ENCODE measurements at regions of chr19 and their contacts with region 1.

Region 1: GRCh38 chr19:47707135-47707925 is 5.9 kb upstream of the EHD2 start:
- DNase-seq: peak; percentile 50 to 83 (median 63)
- ATAC-seq: peak; percentile 59 to 90 (median 86)
- H3K4me3 ChIP-seq: no peak overlapping the region
- H3K27ac ChIP-seq: no peak overlapping the region
- H3K4me1 ChIP-seq: peaks cover 0 to 5% (median 0%) of the 10 kb centered on the region in 12 donors
- H3K27me3 ChIP-seq: no peaks in the 10 kb centered on the region
- CTCF ChIP-seq: peak; percentile 65 to 88 (median 80)
- POLR2A ChIP-seq: no peak

Region 2: GRCh38 chr19:47296036-47296435 is 411.3 kb before region 1 on chr19:
- intact Hi-C with region 1: loop called in 3 of 10 experiments (anchors 5 to 10 kb)
- DNase-seq: peak in 4 of 5 donors; percentile 67 to 76 (median 72)
- ATAC-seq: peak in 3 of 4 donors; percentile 87 to 88 (median 88)
- H3K4me3 ChIP-seq: no peak overlapping the region
- H3K27ac ChIP-seq: no peak overlapping the region
- H3K4me1 ChIP-seq: no peaks in the 10 kb centered on the region
- H3K27me3 ChIP-seq: no peaks in the 10 kb centered on the region
- CTCF ChIP-seq: peak; percentile 66 to 79 (median 74)
- POLR2A ChIP-seq: no peak

Region 3: GRCh38 chr19:47305309-47305751 is 402.0 kb before region 1 on chr19:
- intact Hi-C with region 1: loop called in 1 of 10 experiments (anchors 10 kb)
- DNase-seq: peak; percentile 34 to 85 (median 64)
- ATAC-seq: peak in 2 of 4 donors; percentile 34 to 73
- H3K4me3 ChIP-seq: no peak overlapping the region
- H3K27ac ChIP-seq: no peak overlapping the region
- H3K4me1 ChIP-seq: peaks cover 0 to 8% (median 0%) of the 10 kb centered on the region in 12 donors
- H3K27me3 ChIP-seq: no peaks in the 10 kb centered on the region
- CTCF ChIP-seq: peak; percentile 87 to 95 (median 90)
- POLR2A ChIP-seq: no peak

Region 4: GRCh38 chr19:47436712-47437401 is 270.5 kb before region 1 on chr19:
- intact Hi-C with region 1: loop called in 2 of 10 experiments (anchors 1 kb)
- DNase-seq: peak; percentile 64 to 83 (median 75)
- ATAC-seq: peak; percentile 74 to 93 (median 90)
- H3K4me3 ChIP-seq: no peak overlapping the region
- H3K27ac ChIP-seq: no peak overlapping the region
- H3K4me1 ChIP-seq: peaks cover 0 to 3% (median 0%) of the 10 kb centered on the region in 12 donors
- H3K27me3 ChIP-seq: peaks cover 0 to 76% (median 30%) of the 10 kb centered on the region in 9 donors
- CTCF ChIP-seq: peak; percentile 76 to 94 (median 85)
- POLR2A ChIP-seq: peak in 1 of 2 donors; percentile 16

Region 5: DNA sequence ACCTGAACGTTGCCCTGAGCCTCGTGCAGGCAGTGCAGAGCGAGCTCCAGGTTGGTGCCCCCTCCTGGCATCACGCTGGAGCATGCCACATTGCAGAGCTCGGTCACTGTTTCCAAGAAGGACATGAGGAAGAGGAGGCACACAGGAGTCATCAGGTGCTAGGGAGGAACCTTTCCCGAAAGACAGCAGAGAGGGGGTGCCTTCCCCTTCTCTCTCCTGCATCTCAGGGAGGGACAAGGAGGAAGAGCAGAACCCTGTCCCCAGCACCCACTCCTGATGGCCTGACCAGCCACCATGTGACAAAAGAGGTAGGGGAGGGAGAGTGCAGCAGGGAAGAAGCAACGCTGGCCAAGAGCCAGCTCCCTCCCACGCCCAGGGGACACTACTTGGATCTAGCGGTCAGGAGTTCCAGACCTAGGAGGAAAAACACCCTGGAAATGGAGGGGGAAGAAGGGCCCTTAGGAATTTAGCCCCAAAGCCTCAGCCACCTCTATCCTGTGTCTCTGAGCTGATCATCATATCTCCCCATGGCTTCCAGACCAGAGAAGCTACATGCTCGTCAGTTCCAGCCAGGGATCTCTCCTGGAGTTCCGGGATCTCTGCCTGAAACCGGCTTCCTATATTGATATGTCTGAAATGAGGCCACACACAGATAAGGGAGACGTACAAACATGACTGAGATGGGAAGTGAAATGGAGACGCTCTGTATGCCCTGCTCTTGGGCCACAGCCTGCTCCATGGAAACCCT is 175.5 kb before region 1 on chr19:
- intact Hi-C with region 1: loop called in 1 of 10 experiments (anchors 10 kb)
- DNase-seq: no peak
- ATAC-seq: no peak
- H3K4me3 ChIP-seq: no peak overlapping the region
- H3K27ac ChIP-seq: no peak overlapping the region
- H3K4me1 ChIP-seq: peaks cover 0 to 6% (median 0%) of the 10 kb centered on the region in 12 donors
- H3K27me3 ChIP-seq: no peaks in the 10 kb centered on the region
- CTCF ChIP-seq: no peak
- POLR2A ChIP-seq: no peak

Region 6: GRCh38 chr19:47729992-47730889 is 22.9 kb after region 1 on chr19:
- intact Hi-C with region 1: no loop called
- DNase-seq: peak; percentile 87 to 91 (median 88)
- ATAC-seq: peak; percentile 79 to 94 (median 86)
- H3K4me3 ChIP-seq: peak overlapping the region in 10 of 12 donors; percentile 6 to 43 (median 24)
- H3K27ac ChIP-seq: peak overlapping the region; percentile 59 to 92 (median 80)
- H3K4me1 ChIP-seq: peaks cover 0 to 57% (median 33%) of the 10 kb centered on the region in 12 donors
- H3K27me3 ChIP-seq: peaks cover 0 to 19% (median 0%) of the 10 kb centered on the region in 9 donors
- CTCF ChIP-seq: no peak
- POLR2A ChIP-seq: no peak

Measured in heart left ventricle (tissue), 16 donors.